ENCODE measurements at regions of chr9 and their contacts with region 1.

Region 1: DNA sequence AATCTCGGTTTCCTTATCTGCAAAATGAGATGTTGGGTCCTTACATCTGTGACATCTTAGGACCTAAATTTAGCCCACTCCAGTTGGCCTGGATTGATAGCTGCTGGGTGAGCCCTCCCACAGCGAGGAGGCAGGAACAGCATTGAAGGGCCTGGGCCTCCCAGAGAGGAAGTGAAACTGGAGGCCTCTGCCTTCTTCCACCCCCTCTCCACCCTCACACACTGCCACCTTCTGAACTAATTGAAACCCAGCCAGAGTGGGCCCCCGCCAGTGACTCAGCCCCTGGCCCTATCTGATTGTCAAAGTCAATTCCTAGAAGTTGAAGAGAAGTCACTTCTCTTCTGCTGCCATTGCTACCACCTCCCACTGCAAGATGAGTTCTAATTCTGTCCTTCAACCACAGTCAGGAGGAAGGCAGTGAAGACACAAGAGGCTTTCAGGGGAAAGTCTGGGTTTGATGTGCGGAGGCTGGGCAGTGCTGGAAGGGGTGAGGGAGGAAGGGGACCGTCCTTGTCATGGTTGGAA is 55.2 kb upstream of the NEK6 start:
- DNase-seq: peak; percentile 75
- ATAC-seq: peak; percentile 100
- H3K4me3 Mint-ChIP-seq: peak overlapping the region; percentile 86
- H3K27ac Mint-ChIP-seq: peak overlapping the region; percentile 97
- H3K4me1 Mint-ChIP-seq: peaks cover 56% of the 10 kb centered on the region
- H3K27me3 Mint-ChIP-seq: no peaks in the 10 kb centered on the region

Region 2: GRCh38 chr9:124218438-124218982 is 16.0 kb after region 1 on chr9:
- POLR2A ChIA-PET with region 1: interaction called, 38 read pairs
- DNase-seq: no peak
- ATAC-seq: peak; percentile 21
- H3K4me3 Mint-ChIP-seq: peak overlapping the region; percentile 40
- H3K27ac Mint-ChIP-seq: peak overlapping the region; percentile 87
- H3K4me1 Mint-ChIP-seq: peaks cover 64% of the 10 kb centered on the region
- H3K27me3 Mint-ChIP-seq: peaks cover 6% of the 10 kb centered on the region

Region 3: DNA sequence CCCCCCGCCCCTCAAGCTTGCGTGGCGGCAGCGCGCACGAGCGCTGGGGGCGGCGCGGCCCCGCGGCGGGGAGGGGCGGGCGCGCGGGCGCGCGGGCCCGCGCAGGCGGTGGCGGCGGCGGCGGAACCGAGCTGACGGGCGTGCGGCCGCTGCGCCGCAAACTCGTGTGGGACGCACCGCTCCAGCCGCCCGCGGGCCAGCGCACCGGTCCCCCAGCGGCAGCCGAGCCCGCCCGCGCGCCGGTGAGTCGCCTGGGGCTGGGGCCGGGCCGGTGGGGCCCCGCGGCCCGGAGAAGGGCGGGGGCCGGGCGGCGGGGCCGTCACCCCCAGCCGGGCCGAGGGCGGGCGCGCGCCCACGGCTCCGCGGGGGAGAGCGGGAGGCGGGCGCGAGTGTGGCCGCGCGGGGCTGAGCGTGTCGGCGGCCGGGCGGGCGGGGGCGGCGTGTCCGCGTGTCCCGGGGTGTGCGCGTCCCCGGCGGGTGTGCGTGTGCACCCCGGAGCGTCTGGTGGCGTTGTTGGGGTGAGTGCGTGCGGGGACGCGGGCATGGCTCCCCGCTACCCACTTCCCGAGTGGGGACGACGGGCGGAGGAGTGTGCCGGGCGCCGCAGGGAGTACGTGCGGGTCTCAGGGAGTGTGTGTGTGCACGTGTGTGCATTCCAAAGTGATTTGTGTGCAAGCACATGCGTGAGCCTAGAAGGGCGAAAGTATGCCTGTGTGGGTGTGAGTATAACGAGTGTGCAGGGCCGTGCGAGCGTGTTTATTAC is 55.5 kb after region 1 on chr9 and contains the start of gene NEK6:
- POLR2A ChIA-PET with region 1: no interaction called
- DNase-seq: peak; percentile 65
- ATAC-seq: peak; percentile 62
- H3K4me3 Mint-ChIP-seq: peak within 1 kb of the TSS; percentile 86
- H3K27ac Mint-ChIP-seq: peak within 1 kb of the TSS; percentile 80
- H3K4me1 Mint-ChIP-seq: peaks cover 34% of the 10 kb centered on the region
- H3K27me3 Mint-ChIP-seq: peaks cover 40% of the 10 kb centered on the region
- total RNA-seq, gene NEK6: 8.1 to 10.9 TPM